ENCODE measurements at regions of chr18 and their contacts with region 1.

Region 1: GRCh38 chr18:50266248-50266704 is at the start of gene CFAP53:
- DNase-seq: peak; percentile 92
- H3K4me3 Mint-ChIP-seq: peak within 1 kb of the TSS; percentile 77
- H3K27ac Mint-ChIP-seq: peak within 1 kb of the TSS; percentile 20
- H3K4me1 Mint-ChIP-seq: peaks cover 29% of the 10 kb centered on the region
- H3K27me3 Mint-ChIP-seq: peaks cover 4% of the 10 kb centered on the region

Region 2: GRCh38 chr18:50281295-50281971 is 15.2 kb after region 1 on chr18 and contains the start of gene MBD1:
- CTCF ChIA-PET with region 1: interaction called, 15 read pairs
- DNase-seq: peak; percentile 98
- H3K4me3 Mint-ChIP-seq: peak within 1 kb of the TSS; percentile 98
- H3K27ac Mint-ChIP-seq: peak within 1 kb of the TSS; percentile 94
- H3K4me1 Mint-ChIP-seq: peaks cover 64% of the 10 kb centered on the region
- H3K27me3 Mint-ChIP-seq: no peaks in the 10 kb centered on the region

Measured in activated naive CD4-positive, alpha-beta T cell treated with anti-CD3 and anti-CD28 coated beads, Interleukin-2, amount 10 ng/mL, durations not matched to agents 7 days and 5 days (primary cell).